GM10248 (cell line): ENCODE measurements at regions of chr5 and their contacts with region 1.

Region 1: DNA sequence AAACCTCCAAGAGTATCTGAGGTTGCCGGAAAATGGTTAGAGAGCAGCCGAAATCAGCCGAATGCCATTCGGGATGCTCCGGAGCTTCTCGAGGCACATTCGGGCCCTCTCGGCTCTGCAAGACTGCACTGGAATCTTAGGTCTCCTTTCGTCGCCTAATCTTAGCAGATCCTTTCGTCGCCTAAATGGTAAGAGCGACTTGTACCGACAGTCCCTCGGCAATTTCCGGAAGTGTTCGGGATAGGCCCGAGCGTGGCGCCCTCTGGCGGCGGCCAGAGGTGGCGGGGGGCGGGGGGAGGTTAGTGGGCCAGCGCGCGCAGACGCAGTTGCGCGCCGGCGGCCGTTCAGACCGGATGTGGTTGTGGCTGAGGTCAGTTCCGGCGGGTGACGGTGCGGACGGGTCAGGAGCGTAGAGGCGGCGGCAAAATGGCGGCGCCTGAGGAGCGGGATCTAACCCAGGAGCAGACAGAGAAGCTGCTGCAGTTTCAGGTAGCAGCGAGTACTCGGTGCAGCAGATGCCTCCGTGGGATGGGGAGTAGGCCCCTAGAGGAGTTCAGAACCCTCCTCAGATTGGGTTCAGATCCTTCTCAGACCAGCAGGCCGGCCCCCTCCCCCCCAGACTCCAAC is at the start of gene FAF2:
- DNase-seq: peak; percentile 99
- CTCF ChIP-seq: peak; percentile 89

Region 2: GRCh38 chr5:176391999-176392398 is 56.1 kb before region 1 on chr5:
- CTCF ChIA-PET with region 1: interaction called, 11 read pairs
- POLR2A ChIA-PET with region 1: no interaction called
- DNase-seq: no peak
- CTCF ChIP-seq: no peak

Region 3: DNA sequence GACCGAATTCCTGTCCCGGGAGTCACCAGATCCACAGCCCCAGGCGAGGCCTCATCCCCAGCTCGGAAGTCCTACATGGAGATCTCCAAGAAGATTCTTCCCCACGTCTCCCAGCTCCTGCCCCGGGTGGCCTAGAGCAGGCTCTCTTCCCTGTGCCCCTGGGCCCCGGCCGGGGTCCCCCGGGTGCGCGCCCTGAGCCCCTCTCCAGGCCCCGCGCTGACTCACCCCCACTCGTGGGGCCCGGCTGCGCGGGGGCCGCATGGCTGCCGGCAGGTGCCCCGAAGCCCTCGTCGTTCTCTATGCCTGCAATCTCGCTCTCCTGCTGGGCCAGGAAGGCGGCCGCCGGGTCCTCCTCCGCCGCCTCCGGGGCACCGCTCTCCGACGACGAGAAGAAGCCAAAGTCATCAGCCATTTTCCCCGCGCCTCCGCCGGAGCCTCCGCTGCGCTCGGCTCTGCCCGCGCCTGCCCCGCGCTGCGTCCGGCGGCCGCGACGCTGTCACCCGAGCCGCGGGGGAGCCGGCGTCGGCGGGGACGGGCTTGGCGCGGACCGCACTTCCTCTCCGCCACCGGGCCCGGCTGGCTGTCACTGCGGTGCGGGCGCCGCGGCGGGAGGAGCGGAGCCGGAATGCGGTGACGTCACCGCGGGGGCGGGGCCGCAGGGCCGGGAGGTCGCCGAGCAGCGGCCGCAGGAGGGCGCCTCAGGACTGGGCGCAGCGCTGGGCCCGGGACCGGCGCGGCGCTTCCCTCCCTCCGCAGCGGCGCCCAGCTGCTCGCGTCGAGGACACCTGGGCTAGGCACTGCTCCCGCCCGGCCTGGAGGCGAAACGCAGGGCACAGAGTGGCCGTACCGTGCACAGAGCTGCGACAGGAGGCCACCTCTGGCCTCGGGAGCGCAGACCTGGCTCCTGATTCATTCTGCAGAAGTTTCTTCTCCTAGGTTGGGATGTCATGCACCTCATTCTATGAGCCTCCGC is 31.9 kb before region 1 on chr5 and contains the start of gene CLTB:
- CTCF ChIA-PET with region 1: interaction called, 33 read pairs
- POLR2A ChIA-PET with region 1: interaction called, 3 read pairs
- DNase-seq: peak; percentile 95
- CTCF ChIP-seq: peak; percentile 87

Region 4: GRCh38 chr5:176458904-176459561 is 10.9 kb after region 1 on chr5:
- CTCF ChIA-PET with region 1: interaction called, 47 read pairs
- POLR2A ChIA-PET with region 1: no interaction called
- DNase-seq: no peak
- CTCF ChIP-seq: no peak

Region 5: DNA sequence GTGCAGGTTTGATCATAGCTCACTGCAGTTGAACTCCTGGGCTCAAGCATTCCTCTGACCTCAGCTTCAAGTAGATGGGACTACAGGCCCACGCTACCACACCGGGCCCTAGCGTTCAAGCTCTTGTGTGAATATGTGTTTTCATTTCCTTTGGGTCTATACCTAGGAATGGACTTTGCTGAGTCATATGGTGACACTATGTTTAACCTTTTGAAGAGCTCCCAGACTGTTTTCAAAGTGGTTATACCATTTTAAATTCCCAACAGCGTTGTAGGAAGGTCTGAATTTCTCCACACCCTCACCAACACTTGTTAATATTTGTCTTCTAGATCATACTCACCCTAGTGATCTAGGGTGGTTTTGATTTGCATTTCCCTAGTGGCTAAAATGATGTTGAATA is 33.6 kb after region 1 on chr5:
- CTCF ChIA-PET with region 1: interaction called, 10 read pairs
- POLR2A ChIA-PET with region 1: no interaction called
- DNase-seq: no peak
- CTCF ChIP-seq: no peak

Region 6: DNA sequence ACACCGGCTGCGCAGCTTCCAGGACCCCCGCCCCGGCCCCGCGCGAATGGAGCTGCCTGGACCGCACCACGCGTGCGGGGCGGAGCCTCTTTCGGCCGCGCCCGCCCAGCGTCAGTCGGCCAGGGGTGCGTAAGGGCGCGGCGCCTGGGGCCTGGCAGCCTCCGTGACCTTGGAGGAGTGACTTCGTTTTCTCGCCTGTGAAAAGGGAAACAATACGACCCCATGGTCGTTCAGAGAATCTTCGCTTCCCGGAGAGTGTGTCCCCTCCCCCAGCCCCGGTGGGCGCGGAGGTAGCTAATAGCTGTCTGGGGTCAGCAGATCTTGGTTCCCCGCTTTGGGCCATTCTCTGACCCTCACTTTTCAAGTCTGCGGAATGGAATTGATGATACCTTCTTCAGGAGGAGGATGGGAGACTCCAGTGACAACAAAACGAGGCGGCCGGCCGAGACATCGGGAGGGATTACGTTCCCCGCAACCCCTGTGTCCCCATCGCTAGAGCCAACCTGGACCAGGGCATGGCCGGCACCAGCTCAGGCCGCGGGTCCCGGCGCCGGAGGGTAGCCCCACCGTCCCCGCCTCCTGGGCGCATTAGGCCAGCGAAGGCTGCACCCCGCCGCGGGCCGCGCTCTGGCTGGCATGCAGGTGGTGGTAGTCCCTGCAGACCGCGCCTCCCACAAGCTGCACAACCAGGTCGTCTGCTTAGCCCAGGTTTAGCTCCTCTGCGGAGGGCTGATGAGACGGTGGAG is 95.5 kb after region 1 on chr5:
- CTCF ChIA-PET with region 1: interaction called, 15 read pairs
- POLR2A ChIA-PET with region 1: interaction called, 9 read pairs
- DNase-seq: peak; percentile 73
- CTCF ChIP-seq: peak; percentile 6